ENCODE measurements at regions of chr9 and their contacts with region 1.

Region 1: DNA sequence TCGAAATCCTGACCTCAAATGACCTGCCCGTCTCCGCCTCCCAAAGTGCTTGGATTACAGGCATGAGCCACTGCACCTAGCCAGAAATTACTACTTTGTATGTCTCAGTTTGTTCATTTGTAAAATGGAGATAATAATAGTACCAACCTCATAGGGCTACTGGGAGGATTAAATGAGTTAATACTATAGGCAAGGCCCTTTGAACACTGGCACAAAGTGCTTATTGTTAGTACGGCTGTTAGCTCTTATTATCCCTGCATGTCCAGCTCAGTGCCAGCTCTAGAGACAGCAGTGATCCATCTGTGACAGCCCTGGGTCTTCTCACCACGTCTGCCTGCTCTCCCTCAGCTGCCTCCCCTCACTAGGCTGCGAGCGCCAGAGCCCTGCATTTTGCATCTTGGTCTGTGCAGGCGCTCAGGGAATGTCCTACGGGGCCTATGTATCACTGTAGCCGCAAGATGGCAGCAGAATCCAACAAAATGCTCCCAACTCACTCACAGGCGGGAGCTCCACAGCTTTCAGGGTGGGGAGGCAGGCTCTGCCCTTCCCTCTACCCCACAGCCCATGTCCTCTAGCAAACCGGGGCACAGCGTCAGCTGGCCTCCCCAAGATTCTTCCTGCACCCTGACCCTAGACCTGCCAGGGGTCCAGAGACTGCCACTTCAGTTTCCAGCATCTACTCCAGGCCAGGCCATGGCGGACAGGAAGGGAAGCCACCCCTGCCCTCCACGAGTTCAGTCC is 17.7 kb upstream of the AKNA start:
- DNase-seq: peak; percentile 94
- H3K4me3 Mint-ChIP-seq: no peak overlapping the region
- H3K27ac Mint-ChIP-seq: peak overlapping the region; percentile 51
- H3K4me1 Mint-ChIP-seq: peaks cover 11% of the 10 kb centered on the region
- H3K27me3 Mint-ChIP-seq: no peaks in the 10 kb centered on the region

Region 2: GRCh38 chr9:114339130-114339908 is 66.1 kb before region 1 on chr9:
- intact Hi-C with region 1: loop called (anchors 2 kb)
- DNase-seq: peak; percentile 84
- H3K4me3 Mint-ChIP-seq: no peak overlapping the region
- H3K27ac Mint-ChIP-seq: no peak overlapping the region
- H3K4me1 Mint-ChIP-seq: peaks cover 13% of the 10 kb centered on the region
- H3K27me3 Mint-ChIP-seq: no peaks in the 10 kb centered on the region

Region 3: DNA sequence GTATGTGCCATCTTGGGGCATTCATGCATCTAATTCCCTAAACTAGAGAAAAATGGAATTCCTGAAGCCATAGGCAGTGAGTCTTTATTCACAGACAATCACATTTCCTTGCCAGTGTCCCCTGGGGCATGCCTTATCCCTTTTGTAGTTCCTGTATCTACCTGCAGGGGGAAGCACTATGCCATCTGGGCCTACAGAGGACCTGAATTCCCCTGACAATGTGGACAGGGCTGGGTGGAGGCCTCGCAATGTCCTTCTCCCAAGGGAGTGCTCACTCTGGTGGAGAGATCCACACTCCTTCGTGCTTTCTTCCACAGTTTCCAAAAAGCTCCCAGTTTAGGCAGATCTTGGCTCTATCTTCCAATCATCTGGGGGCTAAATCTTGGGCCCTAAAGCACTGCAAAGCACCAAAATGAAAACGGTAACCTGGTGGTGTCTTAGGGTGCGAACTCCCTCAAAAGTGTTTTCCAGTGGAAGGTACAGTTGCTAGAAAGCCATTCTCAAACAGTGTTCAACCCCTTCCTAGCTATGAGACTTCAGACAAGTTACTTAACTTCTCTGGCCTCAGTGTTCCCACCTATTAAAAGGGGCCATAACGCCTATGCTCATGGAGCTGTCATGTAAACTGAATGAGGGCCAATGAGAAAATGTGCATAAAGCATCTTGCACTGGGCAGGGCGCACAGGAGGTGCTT is 82.3 kb after region 1 on chr9:
- intact Hi-C with region 1: loop called (anchors 5 kb)
- DNase-seq: peak; percentile 92
- H3K4me3 Mint-ChIP-seq: no peak overlapping the region
- H3K27ac Mint-ChIP-seq: peak overlapping the region; percentile 12
- H3K4me1 Mint-ChIP-seq: peaks cover 32% of the 10 kb centered on the region
- H3K27me3 Mint-ChIP-seq: peaks cover 8% of the 10 kb centered on the region